Heart right ventricle (tissue), 16 donors: ENCODE measurements at regions of chr4 and their contacts with region 1.

Region 1: DNA sequence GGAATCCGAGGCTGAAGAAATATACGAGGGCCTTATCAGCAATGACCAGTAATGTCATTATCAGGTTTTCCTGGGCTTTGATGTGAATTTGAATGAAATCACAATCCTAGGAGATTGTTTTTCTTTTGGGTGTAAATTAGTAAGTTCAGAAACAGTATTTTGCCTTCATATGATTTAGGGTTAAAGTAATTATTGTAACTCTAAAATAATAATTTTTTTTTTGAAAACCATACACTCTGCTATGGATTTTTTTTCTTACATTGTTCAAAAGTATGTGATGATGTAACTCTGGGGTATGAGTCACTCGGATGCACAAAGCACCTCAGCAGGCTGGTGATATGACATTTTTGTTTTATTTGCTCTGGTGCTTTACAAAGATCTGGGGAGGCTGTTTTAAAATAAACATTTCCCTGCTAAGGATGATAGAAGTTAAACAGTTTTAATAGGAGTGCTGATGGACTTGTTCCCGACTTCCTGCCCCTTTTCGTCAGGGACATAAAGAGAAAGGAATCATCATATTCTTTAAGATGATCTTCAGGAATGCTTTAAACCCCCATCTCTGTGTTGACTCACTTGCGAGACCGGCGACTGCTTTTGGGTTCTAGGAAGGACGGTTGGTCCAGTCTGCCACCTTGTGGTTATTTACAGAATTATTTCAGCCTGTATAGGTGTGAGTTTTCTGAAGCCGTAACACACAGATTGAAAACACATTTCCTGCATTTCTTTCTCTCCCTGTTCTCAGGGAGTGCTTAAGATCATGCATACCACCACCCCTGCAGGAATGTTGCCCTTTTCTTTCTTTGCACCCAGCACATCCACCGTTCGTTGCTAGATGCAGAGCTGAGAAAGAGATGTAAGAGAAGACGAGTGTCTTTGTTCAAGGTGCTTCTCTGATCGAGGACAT is 72.5 kb downstream of the RAPGEF2 start:
- DNase-seq: peak; percentile 35 to 81
- ATAC-seq: peak; percentile 81 to 91 (median 87)
- H3K4me3 ChIP-seq: peak overlapping the region in 3 of 10 donors; percentile 4 to 18 (median 8)
- H3K27ac ChIP-seq: peak overlapping the region in 9 of 10 donors; percentile 11 to 81 (median 57)
- H3K4me1 ChIP-seq: peaks cover 11 to 100% (median 92%) of the 10 kb centered on the region in 9 donors
- H3K27me3 ChIP-seq: no peaks in the 10 kb centered on the region
- CTCF ChIP-seq: peak; percentile 56 to 87 (median 82)

Region 2: GRCh38 chr4:158211222-158211621 is 964.1 kb before region 1 on chr4:
- intact Hi-C with region 1: no loop called
- DNase-seq: no peak
- ATAC-seq: no peak
- H3K4me3 ChIP-seq: peak overlapping the region in 9 of 10 donors; percentile 1 to 62 (median 54)
- H3K27ac ChIP-seq: peak overlapping the region in 9 of 10 donors; percentile 78 to 96 (median 92)
- H3K4me1 ChIP-seq: peaks cover 0 to 40% (median 15%) of the 10 kb centered on the region in 9 donors
- H3K27me3 ChIP-seq: no peaks in the 10 kb centered on the region
- CTCF ChIP-seq: no peak

Region 3: GRCh38 chr4:158722917-158723793 is 452.2 kb before region 1 on chr4 and contains the start of gene PPID:
- intact Hi-C with region 1: loop called in 5 of 10 experiments (anchors 5 to 10 kb)
- DNase-seq: peak; percentile 82 to 88
- ATAC-seq: peak; percentile 97 to 99 (median 98)
- H3K4me3 ChIP-seq: peak within 1 kb of the TSS; percentile 62 to 97 (median 78)
- H3K27ac ChIP-seq: peak within 1 kb of the TSS; percentile 82 to 97 (median 92)
- H3K4me1 ChIP-seq: peaks cover 0 to 29% (median 10%) of the 10 kb centered on the region in 9 donors
- H3K27me3 ChIP-seq: no peaks in the 10 kb centered on the region
- CTCF ChIP-seq: peak in 2 of 9 donors; percentile 18 to 19
- total RNA-seq, gene PPID: 23.8 to 37.1 (median 33.1) TPM

Region 4: GRCh38 chr4:158768555-158769174 is 406.7 kb before region 1 on chr4 and contains the start of gene FNIP2:
- intact Hi-C with region 1: loop called in 1 of 10 experiments (anchors 5 kb)
- DNase-seq: peak; percentile 85 to 87
- ATAC-seq: peak; percentile 91 to 97 (median 94)
- H3K4me3 ChIP-seq: peak within 1 kb of the TSS; percentile 81 to 93 (median 88)
- H3K27ac ChIP-seq: peak within 1 kb of the TSS; percentile 73 to 95 (median 91)
- H3K4me1 ChIP-seq: peaks cover 8 to 57% (median 43%) of the 10 kb centered on the region in 9 donors
- H3K27me3 ChIP-seq: no peaks in the 10 kb centered on the region
- CTCF ChIP-seq: no peak
- total RNA-seq, gene FNIP2: 34.1 to 89.7 (median 53.4) TPM

Region 5: DNA sequence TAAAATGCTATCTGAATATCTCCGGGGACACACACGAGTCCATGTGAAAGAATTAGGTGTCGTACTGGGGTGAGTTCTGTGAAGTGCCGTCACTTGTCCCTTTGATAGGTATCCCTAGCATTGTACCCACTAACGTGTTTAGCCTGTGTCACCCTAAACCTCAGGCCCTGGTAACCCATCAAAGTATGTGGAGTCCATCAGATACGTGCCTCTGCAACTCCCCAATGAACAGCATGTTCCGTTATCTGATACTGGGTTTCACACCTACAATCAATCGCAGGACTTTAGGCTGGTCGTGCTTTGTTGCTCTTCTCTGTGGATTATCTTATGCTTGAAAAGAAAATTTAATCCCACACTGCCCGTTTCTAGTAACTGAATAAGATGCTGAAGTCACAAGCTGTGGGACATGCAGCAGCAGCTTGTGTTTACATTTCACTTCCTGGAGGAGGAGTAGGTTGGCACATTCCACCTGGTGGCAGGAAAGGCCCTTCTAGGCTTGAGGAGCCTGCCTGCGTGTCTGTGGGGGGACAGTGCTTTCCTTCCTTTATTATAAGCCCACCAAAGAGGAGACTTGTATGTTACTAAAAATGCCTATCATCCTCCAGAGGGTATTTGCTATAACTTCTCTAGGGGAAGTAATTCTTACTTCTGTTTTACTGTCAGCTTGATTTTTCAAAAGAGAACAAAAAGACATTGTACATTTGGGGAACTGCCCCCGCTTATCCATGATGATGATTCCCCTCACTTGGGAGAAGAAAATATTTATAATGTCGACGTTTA is 279.4 kb before region 1 on chr4:
- intact Hi-C with region 1: loop called in 2 of 10 experiments (anchors 10 kb)
- DNase-seq: no peak
- ATAC-seq: peak in 3 of 8 donors; percentile 27 to 44 (median 41)
- H3K4me3 ChIP-seq: no peak overlapping the region
- H3K27ac ChIP-seq: peak overlapping the region in 6 of 10 donors; percentile 0 to 74 (median 36)
- H3K4me1 ChIP-seq: peaks cover 0 to 24% (median 11%) of the 10 kb centered on the region in 9 donors
- H3K27me3 ChIP-seq: no peaks in the 10 kb centered on the region
- CTCF ChIP-seq: peak in 3 of 9 donors; percentile 20 to 32 (median 20)

Region 6: GRCh38 chr4:158949099-158949498 is 226.2 kb before region 1 on chr4:
- intact Hi-C with region 1: no loop called
- DNase-seq: no peak
- ATAC-seq: peak in 4 of 8 donors; percentile 52 to 67 (median 60)
- H3K4me3 ChIP-seq: no peak overlapping the region
- H3K27ac ChIP-seq: peak overlapping the region in 2 of 10 donors; percentile 3 to 26
- H3K4me1 ChIP-seq: peaks cover 0 to 10% (median 0%) of the 10 kb centered on the region in 9 donors
- H3K27me3 ChIP-seq: no peaks in the 10 kb centered on the region
- CTCF ChIP-seq: no peak

Region 7: DNA sequence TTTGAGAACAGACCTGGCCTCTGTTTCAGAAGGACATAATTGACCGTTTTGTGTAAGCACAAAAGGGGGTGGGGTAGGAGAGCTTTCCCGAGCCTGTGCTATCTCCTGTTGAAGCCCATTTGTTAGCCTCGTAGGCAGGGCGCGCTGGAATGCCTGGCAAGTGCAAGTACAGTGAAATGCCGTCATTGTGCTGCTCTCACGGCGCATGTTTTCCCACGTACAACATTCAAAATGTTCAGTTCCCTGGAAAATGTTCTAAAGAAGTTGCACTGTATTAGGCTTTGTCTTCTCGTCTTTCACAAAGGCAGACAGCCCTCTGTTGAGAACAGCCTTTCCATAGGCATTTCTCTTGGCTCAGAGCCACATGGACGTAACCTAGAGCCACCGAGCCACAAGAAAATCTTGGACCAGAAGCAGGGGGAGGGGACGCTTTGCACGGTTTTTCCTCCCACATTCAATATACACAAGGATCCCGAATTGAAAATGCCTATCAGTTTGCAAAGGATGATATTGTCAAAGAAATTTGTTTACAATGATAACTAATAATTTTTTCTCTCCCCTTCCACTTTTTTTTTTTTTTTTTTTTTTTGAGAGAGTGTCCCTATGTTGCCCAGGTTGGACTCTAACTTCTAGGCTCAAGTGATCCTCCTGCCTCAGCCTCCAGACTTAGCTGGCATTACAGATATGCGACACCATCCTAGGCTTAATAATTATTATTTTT is 127.0 kb before region 1 on chr4:
- intact Hi-C with region 1: loop called in 1 of 10 experiments (anchors 10 kb)
- DNase-seq: peak; percentile 64 to 75
- ATAC-seq: peak; percentile 79 to 98 (median 96)
- H3K4me3 ChIP-seq: peak overlapping the region in 9 of 10 donors; percentile 11 to 55 (median 45)
- H3K27ac ChIP-seq: peak overlapping the region in 5 of 10 donors; percentile 18 to 60 (median 50)
- H3K4me1 ChIP-seq: peaks cover 0 to 19% (median 6%) of the 10 kb centered on the region in 9 donors
- H3K27me3 ChIP-seq: no peaks in the 10 kb centered on the region
- CTCF ChIP-seq: peak in 2 of 9 donors; percentile 27 to 28

Region 8: DNA sequence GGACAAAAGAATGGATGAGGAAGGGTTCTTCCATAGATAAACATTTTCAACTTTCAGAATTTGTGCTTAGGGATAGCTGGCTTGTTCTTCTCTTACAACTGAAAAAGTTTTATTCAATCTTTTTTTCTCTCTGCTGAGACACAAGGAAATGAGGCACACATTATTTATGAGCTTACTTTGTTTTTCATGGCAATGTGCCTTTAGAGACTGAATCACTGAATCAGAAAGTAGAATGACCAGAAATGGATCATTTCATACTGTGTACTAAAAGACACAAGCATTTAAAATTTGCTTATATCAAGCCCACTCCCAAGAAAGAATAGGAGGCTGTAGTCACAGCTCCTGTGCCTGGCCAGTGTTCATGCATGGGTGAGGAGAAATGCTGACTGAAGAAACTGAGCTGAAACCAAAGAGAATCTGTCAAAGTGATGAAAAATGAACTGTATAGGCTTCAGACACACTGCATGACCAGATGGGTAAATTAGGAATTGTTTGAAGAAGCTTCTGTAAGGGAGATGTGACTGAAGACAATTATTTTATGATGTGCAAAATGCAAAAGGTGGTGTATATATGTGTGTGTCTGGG is 341.3 kb after region 1 on chr4:
- intact Hi-C with region 1: no loop called
- DNase-seq: no peak
- ATAC-seq: no peak
- H3K4me3 ChIP-seq: no peak overlapping the region
- H3K27ac ChIP-seq: no peak overlapping the region
- H3K4me1 ChIP-seq: no peaks in the 10 kb centered on the region
- H3K27me3 ChIP-seq: no peaks in the 10 kb centered on the region
- CTCF ChIP-seq: no peak